ENCODE measurements at regions of chr3 and their contacts with region 1.

Region 1: GRCh38 chr3:157532529-157533297 is 29.5 kb upstream of the VEPH1 start:
- DNase-seq: peak; percentile 64
- H3K4me3 ChIP-seq: peak overlapping the region in 1 of 2 experiments; percentile 52; a peak in 2 of 4 replicates
- H3K27ac ChIP-seq: peak overlapping the region; percentile 68 to 83
- H3K4me1 ChIP-seq: peaks cover 2 to 28% of the 10 kb centered on the region in 2 experiments; a peak in 3 of 4 replicates
- H3K27me3 ChIP-seq: no peaks in the 10 kb centered on the region
- CTCF ChIP-seq: peak; percentile 83
- EP300 ChIP-seq: no peak
- RAD21 ChIP-seq: peak; percentile 95

Region 2: DNA sequence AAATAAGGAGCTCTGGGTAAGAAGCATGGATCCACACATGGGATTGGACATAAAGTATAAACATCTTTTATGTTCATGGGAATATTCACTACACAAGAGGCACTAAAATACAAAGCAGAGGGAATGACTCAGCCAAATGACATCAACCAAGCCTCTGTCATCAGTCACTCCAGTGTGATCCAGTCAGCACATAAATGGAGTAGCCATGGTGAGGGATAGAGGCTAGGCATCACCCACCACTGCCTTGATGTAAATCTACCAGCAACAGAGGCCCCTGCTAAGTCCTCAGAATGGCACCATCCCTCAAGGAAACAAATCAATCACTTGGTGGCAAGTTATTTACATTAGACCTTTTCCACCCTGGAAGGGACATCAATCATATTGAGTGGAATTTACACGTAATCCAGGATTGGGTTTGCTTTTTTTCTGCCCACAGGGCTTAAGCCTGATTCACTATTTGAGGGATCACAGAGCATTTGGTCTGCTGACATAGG is 56.7 kb before region 1 on chr3:
- CTCF ChIA-PET with region 1: no interaction called
- POLR2A ChIA-PET with region 1: no interaction called
- DNase-seq: no peak
- H3K4me3 ChIP-seq: no peak overlapping the region
- H3K27ac ChIP-seq: peak overlapping the region in 1 of 2 experiments; percentile 29; a peak in 1 of 4 replicates
- H3K4me1 ChIP-seq: no peaks in the 10 kb centered on the region
- H3K27me3 ChIP-seq: no peaks in the 10 kb centered on the region
- CTCF ChIP-seq: no peak
- EP300 ChIP-seq: no peak
- RAD21 ChIP-seq: no peak

Region 3: GRCh38 chr3:157542711-157543500 is 10.2 kb after region 1 on chr3:
- CTCF ChIA-PET with region 1: interaction called, 73 read pairs
- POLR2A ChIA-PET with region 1: no interaction called
- DNase-seq: peak; percentile 89
- H3K4me3 ChIP-seq: peak overlapping the region; percentile 48 to 57
- H3K27ac ChIP-seq: peak overlapping the region in 1 of 2 experiments; percentile 51; a peak in 1 of 4 replicates
- H3K4me1 ChIP-seq: no peaks in the 10 kb centered on the region; a peak in 1 of 4 replicates
- H3K27me3 ChIP-seq: no peaks in the 10 kb centered on the region
- CTCF ChIP-seq: peak; percentile 42
- EP300 ChIP-seq: no peak
- RAD21 ChIP-seq: 0 out of 2 replicates have a peak, but pooled peaks have one; percentile 7

Region 4: GRCh38 chr3:157572559-157573270 is 40.0 kb after region 1 on chr3:
- CTCF ChIA-PET with region 1: interaction called, 113 read pairs
- POLR2A ChIA-PET with region 1: no interaction called
- DNase-seq: peak; percentile 55
- H3K4me3 ChIP-seq: no peak overlapping the region; a peak in 1 of 4 replicates
- H3K27ac ChIP-seq: no peak overlapping the region
- H3K4me1 ChIP-seq: no peaks in the 10 kb centered on the region; a peak in 1 of 4 replicates
- H3K27me3 ChIP-seq: no peaks in the 10 kb centered on the region
- CTCF ChIP-seq: peak; percentile 80
- EP300 ChIP-seq: no peak
- RAD21 ChIP-seq: peak; percentile 70

Region 5: GRCh38 chr3:158434412-158435038 is 901.8 kb after region 1 on chr3:
- CTCF ChIA-PET with region 1: interaction called, 13 read pairs
- POLR2A ChIA-PET with region 1: no interaction called
- DNase-seq: peak; percentile 17
- H3K4me3 ChIP-seq: no peak overlapping the region; a peak in 1 of 4 replicates
- H3K27ac ChIP-seq: no peak overlapping the region
- H3K4me1 ChIP-seq: peaks cover 0 to 12% of the 10 kb centered on the region in 2 experiments; a peak in 3 of 4 replicates
- H3K27me3 ChIP-seq: no peaks in the 10 kb centered on the region
- CTCF ChIP-seq: peak; percentile 90
- EP300 ChIP-seq: 0 out of 4 replicates have a peak, but pooled peaks of 1 of the 2 experiments have one; percentile 17
- RAD21 ChIP-seq: peak; percentile 95

Region 6: DNA sequence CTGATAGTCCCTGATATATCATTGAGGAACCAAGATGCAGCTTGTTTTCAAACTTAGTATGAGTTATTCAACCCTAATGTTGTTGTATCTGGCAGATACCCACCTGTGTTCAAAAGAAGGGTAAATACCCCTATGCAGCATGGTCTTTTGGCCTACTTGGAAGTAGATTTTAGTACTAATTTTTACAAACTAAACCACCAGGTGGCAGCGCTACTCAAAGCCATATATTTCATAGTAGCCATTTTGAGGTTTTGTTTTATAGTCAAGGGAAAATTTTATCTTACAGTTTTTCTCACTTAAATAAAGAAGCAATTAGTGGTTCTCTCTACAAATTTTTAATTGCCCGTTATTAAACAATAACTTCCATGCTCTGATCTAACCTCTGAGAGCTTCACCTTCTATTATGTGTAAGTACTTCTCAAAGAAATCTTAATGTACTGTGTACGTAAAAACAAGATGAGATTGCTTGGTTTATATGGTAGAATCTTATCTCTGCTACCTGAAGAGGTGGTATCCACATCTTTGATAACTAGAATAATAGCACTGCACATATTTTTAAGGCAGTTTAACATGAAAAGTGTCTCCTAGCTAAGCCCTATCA is 1006.8 kb after region 1 on chr3:
- CTCF ChIA-PET with region 1: interaction called, 10 read pairs
- POLR2A ChIA-PET with region 1: no interaction called
- DNase-seq: peak; percentile 27
- H3K4me3 ChIP-seq: no peak overlapping the region
- H3K27ac ChIP-seq: no peak overlapping the region; a peak in 1 of 4 replicates
- H3K4me1 ChIP-seq: no peaks in the 10 kb centered on the region
- H3K27me3 ChIP-seq: no peaks in the 10 kb centered on the region
- CTCF ChIP-seq: peak; percentile 74
- EP300 ChIP-seq: no peak
- RAD21 ChIP-seq: peak; percentile 62

Measured in SK-N-SH (cell line).